ENCODE measurements at regions of chr6 and their contacts with region 1.

Region 1: DNA sequence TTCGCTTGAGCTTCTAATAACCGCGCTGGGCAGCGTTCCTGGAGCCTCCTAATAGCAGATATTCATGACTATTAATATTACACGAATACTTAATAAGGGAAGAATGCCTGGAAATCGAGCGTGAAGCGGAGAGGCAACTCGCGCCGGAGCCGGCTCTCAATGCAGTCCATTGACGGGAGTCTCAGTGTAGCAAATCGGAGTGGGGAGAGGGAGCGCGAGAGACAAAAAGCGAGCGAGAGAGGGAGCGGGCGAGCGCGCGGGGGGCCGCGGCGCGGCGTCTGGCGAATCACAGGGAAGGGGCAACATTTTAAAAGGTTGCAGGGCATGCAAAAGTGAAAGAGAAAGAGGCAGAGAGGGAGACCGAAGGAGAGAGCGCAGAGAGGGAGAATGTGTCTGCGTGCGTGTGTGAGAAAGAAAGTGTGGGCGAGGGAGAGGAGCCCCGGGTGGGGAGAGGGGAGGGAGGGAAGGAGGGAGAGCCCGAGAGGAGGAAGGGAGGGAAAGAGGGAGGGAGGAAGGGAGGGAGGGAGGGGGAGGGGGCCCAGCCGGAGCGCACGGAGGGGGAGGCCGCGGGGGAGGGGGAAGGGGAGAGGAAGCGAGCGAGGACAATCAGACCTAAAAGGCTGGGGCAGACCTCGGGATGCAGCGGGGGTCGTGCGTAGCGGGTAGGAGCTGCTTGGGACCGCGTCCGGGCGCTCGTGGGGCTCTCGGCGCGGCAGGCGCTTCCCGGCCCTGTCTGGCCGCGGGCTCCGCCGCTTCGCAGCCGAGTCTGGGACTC is 2.7 kb downstream of the TFAP2A start:
- DNase-seq: peak in 7 of 9 donors; percentile 32 to 59 (median 42)
- ATAC-seq: peak; percentile 69
- H3K4me3 ChIP-seq: peak overlapping the region; percentile 68
- H3K4me3 Mint-ChIP-seq: peak overlapping the region; percentile 88 to 98 (median 96)
- H3K27ac ChIP-seq: no peak overlapping the region
- H3K27ac Mint-ChIP-seq: peak overlapping the region; percentile 56 to 91 (median 80)
- H3K4me1 ChIP-seq: peaks cover 8 to 39% of the 10 kb centered on the region in 2 donors
- H3K4me1 Mint-ChIP-seq: peaks cover 36 to 63% (median 44%) of the 10 kb centered on the region in 7 donors
- H3K27me3 ChIP-seq: peaks cover 32 to 49% of the 10 kb centered on the region in 2 donors
- H3K27me3 Mint-ChIP-seq: peaks cover 88 to 95% (median 91%) of the 10 kb centered on the region in 5 donors

Region 2: GRCh38 chr6:9646342-9647067 is 765.7 kb before region 1 on chr6:
- CTCF ChIA-PET with region 1: no interaction called
- POLR2A ChIA-PET with region 1: no interaction called
- intact Hi-C with region 1: no loop called
- DNase-seq: no peak
- ATAC-seq: peak; percentile 37
- H3K4me3 ChIP-seq: no peak overlapping the region
- H3K4me3 Mint-ChIP-seq: no peak overlapping the region
- H3K27ac ChIP-seq: no peak overlapping the region
- H3K27ac Mint-ChIP-seq: no peak overlapping the region
- H3K4me1 ChIP-seq: no peaks in the 10 kb centered on the region
- H3K4me1 Mint-ChIP-seq: no peaks in the 10 kb centered on the region
- H3K27me3 ChIP-seq: no peaks in the 10 kb centered on the region
- H3K27me3 Mint-ChIP-seq: no peaks in the 10 kb centered on the region

Region 3: GRCh38 chr6:10355115-10355702 is 56.9 kb before region 1 on chr6:
- CTCF ChIA-PET with region 1: no interaction called
- POLR2A ChIA-PET with region 1: no interaction called
- intact Hi-C with region 1: no loop called
- DNase-seq: no peak
- ATAC-seq: no peak
- H3K4me3 ChIP-seq: no peak overlapping the region
- H3K4me3 Mint-ChIP-seq: no peak overlapping the region
- H3K27ac ChIP-seq: no peak overlapping the region
- H3K27ac Mint-ChIP-seq: no peak overlapping the region
- H3K4me1 ChIP-seq: no peaks in the 10 kb centered on the region
- H3K4me1 Mint-ChIP-seq: no peaks in the 10 kb centered on the region
- H3K27me3 ChIP-seq: no peaks in the 10 kb centered on the region
- H3K27me3 Mint-ChIP-seq: peaks cover 4 to 25% (median 11%) of the 10 kb centered on the region in 5 donors

Region 4: DNA sequence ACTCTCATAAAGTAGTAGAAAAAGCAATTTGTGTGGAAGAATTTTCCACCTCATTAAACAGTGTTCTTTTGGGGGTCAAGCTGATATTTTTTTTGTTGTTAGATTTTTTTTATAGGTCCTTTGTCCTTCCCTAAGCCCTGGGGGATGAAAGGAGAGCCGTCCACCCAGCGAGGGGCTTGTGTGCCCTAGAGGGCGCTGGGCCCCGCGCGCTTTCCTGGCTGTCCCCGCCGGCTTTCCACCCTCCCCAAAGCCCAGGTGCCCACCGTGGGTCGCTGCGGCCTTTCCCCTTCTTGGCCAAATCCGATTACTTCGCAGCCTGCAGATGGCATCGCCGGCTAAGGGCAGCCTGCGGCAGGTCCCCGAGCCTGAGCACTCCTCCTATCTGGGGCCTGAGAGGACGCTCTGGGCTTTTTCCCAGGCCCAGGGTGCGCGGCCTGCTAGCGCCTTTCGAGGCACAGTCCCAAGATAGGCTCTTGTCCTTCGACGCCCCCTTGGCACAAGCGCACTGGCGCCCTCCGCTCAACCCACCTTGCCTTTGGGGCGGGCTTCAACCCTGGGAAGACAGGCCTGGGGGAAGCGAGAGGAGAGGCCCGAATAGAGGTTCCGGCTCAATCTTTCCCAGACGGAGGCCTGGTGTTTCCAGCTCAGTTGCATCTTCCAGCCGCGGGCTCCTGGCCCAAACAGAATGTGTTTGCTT is 30.9 kb before region 1 on chr6:
- CTCF ChIA-PET with region 1: no interaction called
- POLR2A ChIA-PET with region 1: no interaction called
- intact Hi-C with region 1: loop called (anchors 2 to 5 kb)
- DNase-seq: no peak
- ATAC-seq: no peak
- H3K4me3 ChIP-seq: no peak overlapping the region
- H3K4me3 Mint-ChIP-seq: peak overlapping the region in 2 of 10 donors; percentile 10 to 25
- H3K27ac ChIP-seq: no peak overlapping the region
- H3K27ac Mint-ChIP-seq: no peak overlapping the region
- H3K4me1 ChIP-seq: no peaks in the 10 kb centered on the region
- H3K4me1 Mint-ChIP-seq: peaks cover 4 to 29% (median 16%) of the 10 kb centered on the region in 7 donors
- H3K27me3 ChIP-seq: peaks cover 3 to 20% of the 10 kb centered on the region in 2 donors
- H3K27me3 Mint-ChIP-seq: peaks cover 67 to 78% (median 73%) of the 10 kb centered on the region in 5 donors

Region 5: DNA sequence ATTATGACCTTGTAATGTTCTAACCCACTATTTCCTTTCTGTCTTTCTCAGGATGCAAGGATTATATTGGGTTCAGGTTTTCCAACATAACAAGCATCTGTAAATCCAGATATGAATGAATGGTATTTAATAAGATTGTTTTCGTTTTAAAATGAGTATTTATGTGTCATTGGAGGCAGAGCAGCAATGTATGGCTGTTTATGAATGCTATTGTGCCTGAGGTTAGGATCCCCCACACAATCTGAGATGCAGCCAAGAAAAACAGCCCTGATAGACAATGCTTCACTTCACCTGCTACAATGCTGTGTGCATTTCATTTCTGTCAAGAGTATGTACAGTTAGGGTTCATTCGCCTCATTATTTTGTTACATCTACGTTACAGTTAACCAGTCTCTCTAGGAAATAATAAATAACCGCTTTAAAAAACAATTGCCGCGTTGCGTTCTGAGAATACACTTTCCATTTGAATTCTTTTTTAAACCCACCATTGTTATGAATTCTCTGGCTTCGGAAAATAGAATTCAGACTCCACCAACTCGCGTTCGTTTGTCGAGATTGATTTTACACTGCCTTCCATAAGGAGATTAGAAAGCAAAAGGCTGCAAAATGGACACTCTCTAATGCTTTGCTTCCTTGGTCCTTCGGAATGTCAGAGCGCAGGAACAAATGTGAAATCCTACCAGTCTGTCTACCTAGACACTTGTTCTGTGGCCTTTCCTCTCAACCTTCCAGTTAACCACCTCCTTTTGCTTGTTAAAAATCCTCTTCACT is 16.8 kb before region 1 on chr6:
- CTCF ChIA-PET with region 1: no interaction called
- POLR2A ChIA-PET with region 1: interaction called, 3 read pairs
- intact Hi-C with region 1: loop called in 1 of 2 experiments (anchors 2 kb)
- DNase-seq: no peak
- ATAC-seq: no peak
- H3K4me3 ChIP-seq: no peak overlapping the region
- H3K4me3 Mint-ChIP-seq: no peak overlapping the region
- H3K27ac ChIP-seq: no peak overlapping the region
- H3K27ac Mint-ChIP-seq: no peak overlapping the region
- H3K4me1 ChIP-seq: no peaks in the 10 kb centered on the region
- H3K4me1 Mint-ChIP-seq: peaks cover 0 to 3% (median 0%) of the 10 kb centered on the region in 7 donors
- H3K27me3 ChIP-seq: peaks cover 7 to 31% of the 10 kb centered on the region in 2 donors
- H3K27me3 Mint-ChIP-seq: peaks cover 91 to 97% (median 96%) of the 10 kb centered on the region in 5 donors

Region 6: DNA sequence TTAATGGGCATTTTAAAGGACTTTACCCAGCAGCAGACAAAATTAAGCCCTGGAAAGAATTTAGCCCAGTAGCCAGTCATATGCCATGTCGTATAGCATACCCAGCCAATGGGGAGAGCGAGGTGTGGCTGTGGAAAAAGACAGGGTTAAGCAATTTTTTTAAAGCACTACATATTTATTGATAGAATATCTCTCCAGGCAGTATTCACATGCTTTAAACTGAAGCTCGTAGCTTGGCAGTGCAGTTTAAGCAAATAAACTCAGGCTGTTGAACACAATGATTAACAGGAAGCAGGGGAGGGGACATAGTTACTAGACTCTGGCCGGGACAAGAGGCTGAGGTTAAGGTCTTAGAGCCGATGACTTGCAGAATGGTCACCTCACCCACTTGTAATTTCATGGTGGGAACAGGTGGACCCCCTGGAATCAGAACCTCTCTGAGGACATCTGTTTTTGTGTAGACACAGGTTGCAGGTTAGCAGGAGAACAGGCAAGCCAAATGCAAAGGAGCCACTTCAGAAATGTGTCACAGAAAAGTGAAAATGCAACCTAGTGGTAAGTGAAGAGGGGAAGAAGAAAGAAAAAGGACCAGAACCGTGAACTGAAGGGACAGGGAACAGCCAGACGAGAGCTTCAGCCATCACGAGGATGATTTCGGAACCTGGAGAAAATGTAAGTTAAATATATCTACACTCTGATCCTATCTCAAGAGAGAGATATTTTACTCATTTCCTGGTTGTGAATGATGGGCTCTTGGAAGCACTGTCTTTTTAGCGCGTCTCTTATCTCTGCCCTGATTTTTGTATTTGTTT is 116.2 kb after region 1 on chr6:
- CTCF ChIA-PET with region 1: no interaction called
- POLR2A ChIA-PET with region 1: no interaction called
- intact Hi-C with region 1: loop called in 1 of 2 experiments (anchors 5 kb)
- DNase-seq: peak in 6 of 9 donors; percentile 13 to 36 (median 27)
- ATAC-seq: peak; percentile 70
- H3K4me3 ChIP-seq: peak overlapping the region; percentile 70
- H3K4me3 Mint-ChIP-seq: peak overlapping the region; percentile 87 to 98 (median 94)
- H3K27ac ChIP-seq: peak overlapping the region; percentile 69
- H3K27ac Mint-ChIP-seq: peak overlapping the region; percentile 74 to 95 (median 90)
- H3K4me1 ChIP-seq: peaks cover 10 to 15% of the 10 kb centered on the region in 2 donors
- H3K4me1 Mint-ChIP-seq: peaks cover 32 to 52% (median 44%) of the 10 kb centered on the region in 7 donors
- H3K27me3 ChIP-seq: no peaks in the 10 kb centered on the region
- H3K27me3 Mint-ChIP-seq: peaks cover 0 to 5% (median 0%) of the 10 kb centered on the region in 5 donors

Region 7: DNA sequence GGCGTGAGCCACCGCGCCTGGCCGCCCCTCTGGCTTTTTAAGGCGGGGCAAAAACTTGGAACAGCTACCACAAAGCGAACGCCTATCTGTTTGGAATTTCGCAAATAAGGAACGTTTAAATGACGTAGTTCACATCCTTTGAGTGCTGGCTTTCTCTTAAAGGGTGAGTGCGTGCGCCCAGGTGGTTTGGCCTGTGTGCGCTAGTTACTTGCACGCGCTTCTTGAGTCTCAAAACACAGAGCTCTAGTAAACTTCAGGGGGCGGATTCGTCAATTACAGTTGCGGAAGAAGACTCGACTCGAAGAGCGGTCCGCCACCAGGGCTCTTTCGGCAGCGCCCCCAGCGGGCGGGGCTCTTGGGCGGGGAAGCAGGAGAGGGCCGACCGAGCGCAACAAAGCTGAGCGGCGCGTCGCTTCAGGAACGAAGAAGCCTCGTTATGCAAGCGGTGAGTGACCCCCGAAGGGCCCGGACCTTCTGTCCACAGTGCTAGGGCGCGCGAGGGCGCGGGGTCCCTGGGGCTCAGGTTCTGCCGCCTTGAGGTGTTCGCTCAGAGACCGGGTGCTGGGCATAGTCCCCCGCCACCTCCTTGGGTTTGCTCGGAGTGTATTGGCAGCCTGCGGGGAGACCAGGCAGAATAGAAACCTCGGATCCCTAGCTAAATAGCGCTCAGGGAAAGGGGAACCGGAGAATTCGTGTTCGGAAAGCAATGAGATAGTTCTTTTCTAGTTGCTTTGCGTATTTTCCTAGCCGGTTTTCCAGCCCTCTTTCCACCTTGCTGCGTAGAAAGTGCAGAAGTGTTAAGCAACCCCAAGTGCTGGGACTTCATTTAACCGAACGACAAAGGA is 474.8 kb after region 1 on chr6 and contains the start of gene SYCP2L:
- CTCF ChIA-PET with region 1: no interaction called
- POLR2A ChIA-PET with region 1: no interaction called
- intact Hi-C with region 1: loop called in 1 of 2 experiments (anchors 10 kb)
- DNase-seq: peak in 1 of 9 donors; percentile 14
- ATAC-seq: peak; percentile 18
- H3K4me3 ChIP-seq: no peak within 1 kb of the TSS
- H3K4me3 Mint-ChIP-seq: peak within 1 kb of the TSS; percentile 12 to 82 (median 69)
- H3K27ac ChIP-seq: no peak within 1 kb of the TSS
- H3K27ac Mint-ChIP-seq: no peak within 1 kb of the TSS
- H3K4me1 ChIP-seq: no peaks in the 10 kb centered on the region
- H3K4me1 Mint-ChIP-seq: peaks cover 0 to 29% (median 14%) of the 10 kb centered on the region in 7 donors
- H3K27me3 ChIP-seq: peaks cover 0 to 10% of the 10 kb centered on the region in 2 donors
- H3K27me3 Mint-ChIP-seq: peaks cover 66 to 88% (median 87%) of the 10 kb centered on the region in 5 donors
- total RNA-seq, gene SYCP2L: 0.20 to 0.40 TPM in 2 of 5 experiments, not detected in the others